ENCODE measurements at regions of chr5 and their contacts with region 1.

Region 1: DNA sequence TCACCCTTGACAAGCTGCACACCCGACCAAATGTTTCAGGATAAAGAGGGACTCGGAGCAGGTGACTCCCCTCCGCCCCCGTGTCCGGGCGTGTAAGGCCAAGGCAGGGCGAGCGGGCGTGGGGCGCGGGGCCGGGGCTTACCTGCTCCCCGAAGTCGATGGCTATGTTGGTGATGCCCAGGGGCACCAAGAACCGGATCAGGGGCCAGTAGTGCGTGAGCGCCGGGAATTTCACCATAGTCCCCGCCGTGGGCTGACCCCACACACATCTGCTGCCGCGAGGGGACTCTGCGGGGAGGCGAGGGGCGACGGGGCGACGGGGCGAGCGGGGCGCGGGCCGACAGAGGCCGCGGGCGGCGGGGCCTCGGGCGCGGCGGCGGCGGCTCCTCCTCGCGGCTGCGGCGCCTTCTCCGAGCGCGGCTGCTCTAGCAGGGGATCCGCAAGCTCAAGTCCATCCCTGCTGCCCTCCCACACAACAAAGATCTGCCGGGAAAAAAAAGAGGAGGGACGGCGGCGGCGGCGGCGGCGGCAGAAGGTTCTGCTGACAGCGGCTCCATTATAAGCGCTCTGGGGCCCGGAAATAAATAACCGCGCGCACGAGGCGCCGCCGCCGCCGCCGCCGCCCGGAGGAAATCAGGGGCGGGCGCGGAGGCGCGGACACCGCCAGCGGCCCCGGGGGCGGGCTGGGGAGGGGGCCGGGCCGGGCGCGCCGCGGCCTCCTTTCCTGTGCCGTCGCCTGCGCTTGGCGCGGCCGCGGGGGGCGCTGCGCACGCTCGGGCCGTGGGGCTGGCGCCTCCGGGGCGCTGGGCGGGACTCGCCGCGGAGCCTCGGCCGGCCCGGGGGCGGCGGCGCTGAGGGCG is at the start of gene ANKH:
- DNase-seq: peak; percentile 78 to 83
- H3K4me3 ChIP-seq: peak within 1 kb of the TSS; percentile 53 to 76 (median 57)
- H3K27ac ChIP-seq: peak within 1 kb of the TSS; percentile 93 to 95 (median 94)
- H3K4me1 ChIP-seq: peaks cover 4 to 8% of the 10 kb centered on the region in 2 donors
- H3K27me3 ChIP-seq: no peaks in the 10 kb centered on the region
- CTCF ChIP-seq: peak in 3 of 6 experiments; percentile 17 to 52 (median 48)
- POLR2A ChIP-seq: peak in 1 of 2 donors; percentile 49
- total RNA-seq, gene ANKH: 31.2 to 55.2 (median 34.7) TPM

Region 2: GRCh38 chr5:14739538-14739937 is 131.9 kb before region 1 on chr5:
- intact Hi-C with region 1: loop called (anchors 10 kb)
- DNase-seq: no peak
- H3K4me3 ChIP-seq: no peak overlapping the region
- H3K27ac ChIP-seq: peak overlapping the region in 2 of 3 donors; percentile 39 to 48
- H3K4me1 ChIP-seq: peaks cover 0 to 5% of the 10 kb centered on the region in 2 donors
- H3K27me3 ChIP-seq: no peaks in the 10 kb centered on the region
- CTCF ChIP-seq: no peak
- POLR2A ChIP-seq: no peak

Region 3: GRCh38 chr5:15003511-15003920 is 132.1 kb after region 1 on chr5:
- intact Hi-C with region 1: loop called (anchors 5 kb)
- DNase-seq: peak; percentile 53 to 56
- H3K4me3 ChIP-seq: no peak overlapping the region
- H3K27ac ChIP-seq: no peak overlapping the region
- H3K4me1 ChIP-seq: peaks cover 0 to 11% of the 10 kb centered on the region in 2 donors
- H3K27me3 ChIP-seq: no peaks in the 10 kb centered on the region
- CTCF ChIP-seq: peak; percentile 32 to 75 (median 68)
- POLR2A ChIP-seq: no peak